Right ventricle myocardium inferior (tissue), 1 donor: ENCODE measurements at regions of chr6 and their contacts with region 1.

Region 1: GRCh38 chr6:10694302-10695085 is at the starts of genes C6orf52 and PAK1IP1:
- DNase-seq: peak; percentile 97
- ATAC-seq: peak; percentile 100
- total RNA-seq, gene C6orf52: 0.49 TPM
- total RNA-seq, gene PAK1IP1: 11.5 TPM

Region 2: GRCh38 chr6:10411971-10412745 is 282.3 kb before region 1 on chr6:
- intact Hi-C with region 1: no loop called
- DNase-seq: no peak
- ATAC-seq: peak; percentile 31

Region 3: GRCh38 chr6:10585209-10585845 is 109.2 kb before region 1 on chr6:
- intact Hi-C with region 1: loop called (anchors 2 kb)
- DNase-seq: no peak
- ATAC-seq: peak; percentile 55

Region 4: GRCh38 chr6:10722820-10723566 is 28.5 kb after region 1 on chr6 and contains the start of gene TMEM14C:
- intact Hi-C with region 1: loop called (anchors 2 kb)
- DNase-seq: peak; percentile 100
- ATAC-seq: peak; percentile 99
- total RNA-seq, gene TMEM14C: 120 TPM

Region 5: DNA sequence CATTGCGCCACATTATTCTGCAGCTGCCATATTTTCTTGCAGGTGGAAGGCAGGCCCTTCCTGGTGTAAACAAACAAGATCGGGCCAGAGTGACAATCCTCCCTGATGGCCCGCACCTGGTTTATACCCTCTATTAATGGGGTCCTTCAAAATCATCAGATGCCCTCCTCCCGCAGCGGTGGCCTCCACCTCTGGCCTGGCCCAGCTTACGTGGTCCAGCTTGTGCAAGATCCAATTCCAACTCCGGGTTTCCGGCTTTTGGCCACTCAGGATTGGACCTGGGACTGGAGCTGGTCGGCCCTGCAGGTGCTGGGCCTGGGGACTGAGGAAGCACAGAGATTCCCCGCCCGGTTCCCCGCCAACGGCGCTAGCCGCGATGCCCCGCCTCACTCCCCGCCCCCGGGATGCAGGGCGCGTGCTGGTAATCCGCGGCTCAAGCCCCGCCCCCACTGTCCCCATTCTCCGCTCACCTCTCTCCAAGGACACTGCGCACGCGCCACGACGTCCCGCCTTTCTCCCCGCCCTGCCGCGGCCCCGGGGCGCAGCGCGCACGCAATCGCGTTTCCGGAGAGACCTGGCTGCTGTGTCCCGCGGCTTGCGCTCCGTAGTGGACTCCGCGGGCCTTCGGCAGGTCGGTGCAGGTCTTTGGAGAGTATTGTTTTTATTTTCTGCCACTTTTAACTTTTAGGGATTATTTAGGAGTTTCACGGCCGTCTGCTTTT is 52.9 kb after region 1 on chr6 and contains the start of gene TMEM14B:
- intact Hi-C with region 1: loop called (anchors 2 kb)
- DNase-seq: peak; percentile 100
- ATAC-seq: peak; percentile 99
- total RNA-seq, gene TMEM14B: 106 TPM